GM10248 (cell line): ENCODE measurements at regions of chr11 and their contacts with region 1.

Region 1: DNA sequence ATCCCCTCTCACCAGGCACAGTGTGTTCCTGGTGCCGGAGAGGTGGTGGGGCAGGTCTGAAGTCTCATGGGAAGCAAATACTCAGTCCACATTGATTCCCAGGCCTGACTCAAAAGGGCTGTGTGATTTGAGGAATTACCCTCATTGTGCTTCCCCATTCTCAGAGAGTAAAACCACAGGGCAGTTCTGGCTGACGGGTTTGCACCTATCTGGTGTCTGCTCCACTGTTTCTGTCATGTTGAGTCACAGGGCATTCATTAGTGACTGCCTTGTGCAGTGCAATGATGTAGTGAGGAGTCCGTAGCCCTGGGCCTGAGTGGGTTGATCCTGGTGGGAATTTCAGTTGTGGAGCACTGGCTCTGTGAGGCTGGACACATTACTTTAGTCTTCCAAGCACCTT is 85.2 kb upstream of the ARHGAP20 start:
- DNase-seq: peak; percentile 52
- CTCF ChIP-seq: no peak

Region 2: GRCh38 chr11:110772863-110773262 is 24.6 kb before region 1 on chr11:
- CTCF ChIA-PET with region 1: no interaction called
- POLR2A ChIA-PET with region 1: no interaction called
- DNase-seq: no peak
- CTCF ChIP-seq: no peak

Region 3: GRCh38 chr11:110786226-110786902 is 11.1 kb before region 1 on chr11:
- CTCF ChIA-PET with region 1: interaction called, 11 read pairs
- POLR2A ChIA-PET with region 1: no interaction called
- DNase-seq: no peak
- CTCF ChIP-seq: no peak